Aorta (tissue), 5 donors: ENCODE measurements at regions of chr16 and their contacts with region 1.

Region 1: DNA sequence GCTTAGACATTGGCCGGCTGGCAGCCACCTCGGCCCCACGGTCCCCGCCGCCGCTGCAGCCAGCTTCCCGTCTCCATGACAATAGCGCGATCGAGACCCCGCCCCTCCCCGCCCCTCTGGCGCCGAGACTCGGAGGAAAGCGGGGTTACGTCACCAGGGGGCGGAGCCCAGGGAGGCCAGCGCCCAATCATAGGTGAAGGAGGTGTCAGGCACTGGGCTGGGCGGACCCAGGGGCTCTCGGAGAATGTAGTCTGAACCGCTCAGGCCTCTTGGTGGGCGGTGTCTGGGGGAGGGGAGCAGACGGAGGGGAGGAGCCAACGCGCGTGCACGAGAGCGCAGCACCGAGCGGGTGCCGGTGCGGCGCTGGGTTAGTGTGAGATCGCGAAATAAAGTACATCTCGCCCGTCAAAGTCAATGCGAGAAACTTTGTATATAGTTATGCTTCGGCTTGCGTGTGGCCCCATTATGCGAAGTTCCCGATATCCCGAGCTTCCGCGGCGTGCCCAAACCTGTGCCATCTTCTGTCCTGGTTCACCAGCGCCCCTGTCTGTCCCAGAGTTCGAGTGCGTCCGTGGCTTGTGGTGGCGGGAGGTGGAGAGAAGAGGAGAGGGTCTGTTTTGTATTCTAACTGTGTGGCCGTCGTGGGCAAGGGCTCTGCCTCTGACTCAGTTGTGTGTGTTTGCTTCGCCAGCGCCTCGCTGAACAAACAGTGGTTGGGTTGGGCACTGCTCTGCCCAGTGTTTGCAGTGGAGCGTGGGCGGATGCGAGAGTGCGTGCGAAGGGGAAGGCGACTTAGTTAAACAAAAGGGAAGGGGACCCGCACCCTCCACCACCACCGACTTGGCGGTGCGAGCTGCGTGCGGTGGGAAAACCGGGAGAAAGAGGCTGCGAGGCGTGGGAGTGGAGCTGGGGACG is 1.3 kb upstream of the IRX5 start:
- DNase-seq: peak; percentile 100
- ATAC-seq: peak; percentile 97
- H3K4me3 ChIP-seq: peak overlapping the region; percentile 52 to 72
- H3K27ac ChIP-seq: peak overlapping the region; percentile 3 to 94
- H3K4me1 ChIP-seq: no peaks in the 10 kb centered on the region
- H3K27me3 ChIP-seq: no peaks in the 10 kb centered on the region

Region 2: DNA sequence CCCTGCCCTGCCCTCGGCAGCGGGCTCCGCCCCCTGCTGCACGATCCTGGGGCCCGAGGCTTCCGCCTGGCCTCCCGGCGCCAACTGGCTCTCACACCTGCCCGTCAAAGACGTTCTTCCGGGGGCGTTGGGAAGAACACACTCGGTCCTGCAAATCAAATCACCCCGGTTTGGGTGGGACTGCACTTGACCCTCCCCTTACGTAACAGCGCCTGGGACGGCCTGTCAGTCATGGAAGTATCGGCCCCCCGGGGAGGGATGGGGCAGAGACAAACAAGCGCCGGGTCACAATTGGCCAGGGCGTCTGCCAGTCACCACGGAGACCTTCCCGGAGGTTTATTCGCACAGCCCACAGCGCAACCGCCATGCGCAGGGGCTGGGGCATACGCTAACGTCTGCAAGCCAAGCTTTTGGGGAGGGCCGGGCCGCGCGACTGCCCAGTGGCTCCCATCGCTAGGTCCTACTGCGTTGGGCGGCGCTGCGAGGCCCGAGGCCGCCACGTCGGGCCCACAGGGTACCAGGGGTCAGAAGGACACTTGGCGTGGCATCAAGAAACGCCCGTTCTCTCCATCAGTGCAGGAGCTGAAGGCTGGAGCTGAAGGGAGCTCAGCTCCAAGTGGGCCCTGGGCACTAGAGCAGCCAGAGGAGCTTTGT is 1426.0 kb before region 1 on chr16:
- intact Hi-C with region 1: loop called in 1 of 2 experiments (anchors 5 kb)
- DNase-seq: peak; percentile 100
- ATAC-seq: peak; percentile 97
- H3K4me3 ChIP-seq: peak overlapping the region; percentile 8 to 62
- H3K27ac ChIP-seq: peak overlapping the region; percentile 73 to 78
- H3K4me1 ChIP-seq: peaks cover 0 to 4% of the 10 kb centered on the region in 2 donors
- H3K27me3 ChIP-seq: no peaks in the 10 kb centered on the region

Region 3: DNA sequence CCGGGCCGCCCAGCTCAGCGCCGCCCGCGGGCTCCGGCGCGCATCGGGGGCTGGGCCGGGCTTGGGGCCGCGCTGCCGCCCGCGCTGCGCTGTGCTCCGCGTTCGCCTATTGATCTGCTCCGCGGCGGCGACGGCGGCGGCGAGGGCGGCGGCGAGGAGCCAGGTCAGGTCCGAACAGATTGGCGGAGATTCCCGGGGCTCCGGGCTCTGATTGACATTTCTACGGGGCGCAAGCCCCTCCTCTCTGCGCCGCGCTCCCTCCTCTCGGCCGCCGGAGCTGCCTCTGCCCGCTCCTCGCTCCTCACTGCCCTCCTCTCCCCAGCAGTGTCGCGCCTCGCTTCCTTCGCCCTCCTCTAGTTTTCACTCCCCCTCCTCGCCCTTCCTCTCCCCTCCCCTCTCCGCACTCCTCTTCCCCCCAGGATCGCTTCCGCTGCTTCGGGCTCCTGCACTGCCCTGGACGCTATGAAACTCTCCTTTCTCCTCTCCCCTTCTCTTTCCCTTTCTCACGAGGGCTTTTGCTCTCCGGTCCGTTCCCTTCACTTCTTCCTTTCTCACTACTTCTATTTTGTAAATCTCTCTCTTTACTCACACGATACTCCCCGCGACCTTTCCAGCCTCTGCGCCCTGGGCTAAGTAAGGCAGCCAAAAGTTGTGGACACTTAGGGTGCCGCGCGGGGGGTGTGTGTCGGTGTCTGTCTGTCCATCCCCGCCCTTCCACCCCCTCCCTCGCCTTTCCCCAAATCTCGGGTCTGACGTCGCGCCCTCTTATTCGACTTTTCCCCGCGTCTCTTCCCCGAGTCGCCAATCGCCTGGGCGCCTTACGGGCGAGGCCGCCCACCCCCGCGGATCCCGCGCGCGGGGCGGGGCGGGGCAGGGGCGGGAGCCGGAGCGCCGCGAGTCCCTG is 643.0 kb before region 1 on chr16 and contains the start of gene IRX3:
- intact Hi-C with region 1: loop called (anchors 5 kb)
- DNase-seq: peak; percentile 72 to 93
- ATAC-seq: peak; percentile 85
- H3K4me3 ChIP-seq: peak within 1 kb of the TSS; percentile 42 to 50
- H3K27ac ChIP-seq: no peak within 1 kb of the TSS
- H3K4me1 ChIP-seq: no peaks in the 10 kb centered on the region
- H3K27me3 ChIP-seq: no peaks in the 10 kb centered on the region
- total RNA-seq, gene IRX3: 1.4 to 6.7 TPM

Region 4: DNA sequence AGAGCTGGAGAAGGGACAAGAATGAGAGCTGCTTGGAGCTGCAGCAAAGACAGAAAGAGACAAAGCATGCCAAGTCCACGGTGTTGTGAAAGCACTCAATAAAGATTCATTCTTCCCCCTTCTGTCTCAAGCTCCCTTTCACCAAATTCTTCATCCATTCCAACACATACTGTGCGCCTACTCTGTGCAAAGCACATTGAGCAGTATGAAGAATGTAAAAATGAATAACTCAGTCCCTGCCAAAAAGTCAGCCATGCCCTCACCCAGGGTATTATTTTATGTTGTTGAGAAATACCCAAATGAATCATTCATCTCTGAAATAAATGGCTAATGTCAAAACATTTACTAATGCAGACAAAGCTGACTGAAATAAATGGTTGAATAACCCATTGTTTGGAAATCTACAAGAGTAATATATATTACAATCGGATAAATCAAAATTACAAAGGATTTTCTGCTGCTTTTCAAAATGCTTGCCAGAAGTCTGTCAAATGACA is 281.6 kb before region 1 on chr16:
- intact Hi-C with region 1: loop called in 1 of 2 experiments (anchors 5 kb)
- DNase-seq: no peak
- ATAC-seq: peak; percentile 82
- H3K4me3 ChIP-seq: no peak overlapping the region
- H3K27ac ChIP-seq: peak overlapping the region in 1 of 2 donors; percentile 85
- H3K4me1 ChIP-seq: peaks cover 0 to 2% of the 10 kb centered on the region in 2 donors
- H3K27me3 ChIP-seq: no peaks in the 10 kb centered on the region

Region 5: DNA sequence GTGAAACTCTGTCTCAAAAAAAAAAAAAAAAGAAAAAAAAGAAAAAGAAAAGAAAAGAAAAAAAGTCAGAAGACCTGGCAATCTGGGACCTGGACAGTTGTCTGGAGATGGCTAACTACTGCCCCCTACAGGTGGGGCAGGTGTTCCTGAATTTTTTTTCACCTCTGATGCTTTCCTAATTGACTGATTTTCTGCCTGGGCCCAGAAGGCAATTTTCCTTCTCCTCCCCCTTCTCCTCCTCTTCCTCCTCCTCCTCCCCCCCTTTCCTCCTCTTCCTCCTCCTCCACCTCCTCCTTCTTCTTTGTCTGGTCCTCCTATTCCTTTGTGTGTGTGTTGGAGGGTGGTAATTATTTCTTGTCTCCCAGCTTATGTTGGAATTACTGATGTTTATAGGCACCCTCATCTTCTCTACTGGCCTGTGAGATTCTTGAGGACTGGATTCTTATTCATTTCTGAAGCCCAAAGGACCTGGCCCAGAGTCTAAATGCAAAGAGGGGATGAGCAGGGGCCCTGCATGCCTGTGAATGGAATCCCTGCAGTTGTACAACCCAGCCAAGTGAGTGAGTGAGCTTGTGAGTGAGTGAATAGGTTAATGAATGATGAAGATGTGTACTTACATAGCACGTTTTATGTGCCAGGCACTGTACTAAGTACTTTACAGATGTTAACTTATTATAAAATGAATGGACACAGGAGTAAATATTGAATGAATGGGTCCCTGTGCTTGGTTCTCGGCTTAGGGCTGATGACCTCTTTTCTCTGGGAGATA is 28.2 kb after region 1 on chr16:
- intact Hi-C with region 1: no loop called
- DNase-seq: no peak
- ATAC-seq: no peak
- H3K4me3 ChIP-seq: no peak overlapping the region
- H3K27ac ChIP-seq: no peak overlapping the region
- H3K4me1 ChIP-seq: no peaks in the 10 kb centered on the region
- H3K27me3 ChIP-seq: no peaks in the 10 kb centered on the region

Region 6: GRCh38 chr16:55010492-55011160 is 81.3 kb after region 1 on chr16:
- intact Hi-C with region 1: no loop called
- DNase-seq: no peak
- ATAC-seq: no peak
- H3K4me3 ChIP-seq: no peak overlapping the region
- H3K27ac ChIP-seq: no peak overlapping the region
- H3K4me1 ChIP-seq: no peaks in the 10 kb centered on the region
- H3K27me3 ChIP-seq: no peaks in the 10 kb centered on the region

Region 7: DNA sequence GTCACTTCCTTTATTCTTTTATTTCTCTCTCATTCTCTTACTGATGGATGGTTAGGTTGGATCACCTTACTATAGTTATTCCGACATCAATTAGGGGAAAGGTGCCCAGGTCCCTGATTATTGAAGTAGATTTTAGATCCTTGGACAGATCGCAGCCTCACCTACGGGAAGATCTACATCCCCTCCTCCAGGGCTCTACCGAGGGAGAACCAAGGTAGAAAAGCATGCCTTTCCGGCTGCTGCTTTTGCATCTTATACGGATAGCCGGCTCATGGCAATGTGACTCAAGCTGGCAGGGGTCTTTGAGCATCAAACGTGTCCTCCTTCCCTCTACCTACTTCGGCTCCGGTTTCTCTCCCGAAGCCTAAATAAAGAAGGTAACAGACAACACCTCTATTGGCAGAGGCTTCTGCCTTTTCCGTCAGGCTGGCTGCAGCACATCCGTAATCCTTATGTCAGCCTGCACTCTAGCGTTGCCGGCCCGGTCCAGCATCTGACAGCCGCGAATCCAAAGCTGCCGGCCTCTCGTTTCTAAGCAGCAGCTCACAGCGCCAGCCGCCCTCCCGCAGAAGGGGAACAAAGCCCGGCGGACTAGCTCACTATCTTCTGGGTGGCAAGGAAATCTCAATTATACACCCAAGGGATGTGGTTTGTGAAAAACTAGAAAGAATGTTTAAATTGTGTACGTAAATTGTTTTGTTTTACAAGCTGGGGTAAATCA is 441.6 kb after region 1 on chr16:
- intact Hi-C with region 1: loop called in 1 of 2 experiments (anchors 10 kb)
- DNase-seq: peak; percentile 82 to 85
- ATAC-seq: peak; percentile 87
- H3K4me3 ChIP-seq: no peak overlapping the region
- H3K27ac ChIP-seq: no peak overlapping the region
- H3K4me1 ChIP-seq: peaks cover 3 to 7% of the 10 kb centered on the region in 2 donors
- H3K27me3 ChIP-seq: no peaks in the 10 kb centered on the region